WTC11 (cell line): ENCODE measurements at regions of chr19 and their contacts with region 1.

Region 1: DNA sequence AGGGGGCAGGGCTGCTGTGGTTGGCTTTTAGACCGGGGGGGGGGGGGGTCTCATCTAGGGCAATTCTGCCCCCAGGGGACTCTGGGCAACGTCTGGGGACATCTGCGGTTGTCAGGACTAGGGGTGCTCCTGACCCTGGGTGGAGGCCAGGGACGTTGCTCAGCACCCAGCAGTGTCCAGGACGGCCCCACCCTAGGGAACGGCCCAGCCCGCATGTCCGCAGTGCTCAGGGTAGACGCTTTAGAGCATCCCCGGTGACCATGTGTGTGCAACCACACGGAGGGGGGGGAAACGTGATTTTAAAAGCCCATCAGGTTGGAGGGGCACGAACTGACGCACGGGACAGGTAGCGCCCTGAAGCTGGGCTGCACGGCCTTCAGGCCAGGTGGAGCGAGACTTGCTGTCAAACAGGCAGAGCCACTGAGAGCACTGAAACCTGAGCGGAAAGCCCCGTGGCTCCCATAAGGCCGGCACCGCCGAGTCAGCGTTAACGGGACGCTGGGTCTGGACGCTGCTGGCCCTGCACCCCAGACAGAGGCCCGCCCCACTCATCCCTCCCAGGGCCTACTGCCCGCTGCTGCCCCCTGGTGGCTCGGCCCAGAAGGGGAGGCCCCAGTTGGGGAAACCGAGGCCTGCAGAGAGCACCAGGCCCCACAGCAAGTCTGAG is 8.3 kb downstream of the CACTIN start:
- DNase-seq: peak; percentile 80
- ATAC-seq: peak; percentile 78
- H3K4me3 Mint-ChIP-seq: no peak overlapping the region
- H3K27ac Mint-ChIP-seq: no peak overlapping the region
- H3K4me1 Mint-ChIP-seq: 0 out of 2 replicates have a peak, but pooled peaks cover 3% of the 10 kb centered on the region
- H3K27me3 Mint-ChIP-seq: no peaks in the 10 kb centered on the region
- CTCF ChIP-seq: peak; percentile 92

Region 2: GRCh38 chr19:3593156-3593555 is 25.1 kb before region 1 on chr19:
- CTCF ChIA-PET with region 1: interaction called, 17 read pairs
- POLR2A ChIA-PET with region 1: no interaction called
- DNase-seq: peak; percentile 69
- ATAC-seq: peak; percentile 95
- H3K4me3 Mint-ChIP-seq: no peak overlapping the region
- H3K27ac Mint-ChIP-seq: no peak overlapping the region
- H3K4me1 Mint-ChIP-seq: no peaks in the 10 kb centered on the region
- H3K27me3 Mint-ChIP-seq: peaks cover 27% of the 10 kb centered on the region
- CTCF ChIP-seq: no peak

Region 3: DNA sequence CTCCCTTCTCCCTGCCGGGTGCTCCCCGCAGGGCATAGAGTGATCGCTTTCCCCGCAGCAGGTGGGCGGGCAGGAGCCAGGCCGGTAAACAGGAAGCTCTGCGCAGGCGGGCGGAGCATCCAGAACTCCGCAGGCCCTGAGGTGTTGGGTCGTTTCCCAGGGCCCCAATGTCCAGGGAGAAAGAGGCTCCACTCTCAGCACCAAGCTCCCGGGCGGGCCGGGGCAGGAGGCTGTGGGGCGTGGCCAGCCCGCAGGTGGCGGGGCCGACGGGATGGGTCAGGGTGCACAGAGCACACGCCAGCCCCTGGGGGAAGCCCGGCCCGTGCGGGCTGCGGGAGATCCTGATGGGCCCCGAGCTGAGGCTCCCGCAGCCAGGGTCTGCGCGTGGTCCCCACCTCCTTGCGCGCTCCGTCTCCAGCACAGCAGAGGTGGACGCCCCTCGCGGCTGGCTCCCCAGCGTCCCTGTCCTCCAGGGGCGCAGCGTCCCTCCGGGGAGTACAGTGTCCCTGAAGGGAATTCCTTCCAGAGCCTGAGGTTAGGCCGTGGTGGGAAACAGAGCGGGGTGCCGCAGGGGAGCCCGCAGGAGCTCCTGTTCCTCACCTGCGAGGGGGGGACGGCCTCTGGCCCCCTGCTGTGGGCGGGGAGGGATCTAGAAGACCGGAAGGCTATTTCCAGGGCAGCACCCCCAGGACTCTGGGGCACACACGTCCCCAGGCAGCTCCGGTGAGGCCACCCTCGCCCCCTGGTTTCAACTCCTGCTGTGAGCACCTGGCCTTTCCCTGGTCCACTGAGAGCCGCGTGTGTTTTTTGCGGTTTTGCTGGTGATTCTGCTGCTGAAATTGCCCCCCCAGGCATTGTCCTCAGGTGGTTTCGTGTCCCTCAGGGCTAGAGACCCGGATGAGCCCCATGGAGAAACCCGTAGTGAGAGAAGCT is 69.8 kb after region 1 on chr19:
- CTCF ChIA-PET with region 1: no interaction called
- POLR2A ChIA-PET with region 1: no interaction called
- DNase-seq: peak; percentile 65
- ATAC-seq: peak; percentile 48
- H3K4me3 Mint-ChIP-seq: peak overlapping the region; percentile 47
- H3K27ac Mint-ChIP-seq: peak overlapping the region; percentile 87
- H3K4me1 Mint-ChIP-seq: peaks cover 20% of the 10 kb centered on the region
- H3K27me3 Mint-ChIP-seq: no peaks in the 10 kb centered on the region
- CTCF ChIP-seq: no peak